ENCODE measurements at regions of chr20 and their contacts with region 1.

Region 1: GRCh38 chr20:44979090-44979621 is 12.8 kb downstream of the STK4 start:
- DNase-seq: peak; percentile 93
- H3K4me3 Mint-ChIP-seq: peak overlapping the region; percentile 78
- H3K27ac Mint-ChIP-seq: peak overlapping the region; percentile 96
- H3K4me1 Mint-ChIP-seq: peaks cover 74% of the 10 kb centered on the region
- H3K27me3 Mint-ChIP-seq: no peaks in the 10 kb centered on the region

Region 2: GRCh38 chr20:44960103-44960852 is 18.9 kb before region 1 on chr20 and contains the start of gene TOMM34:
- intact Hi-C with region 1: loop called (anchors 1 kb)
- DNase-seq: peak; percentile 99
- H3K4me3 Mint-ChIP-seq: peak within 1 kb of the TSS; percentile 97
- H3K27ac Mint-ChIP-seq: peak within 1 kb of the TSS; percentile 99
- H3K4me1 Mint-ChIP-seq: peaks cover 62% of the 10 kb centered on the region
- H3K27me3 Mint-ChIP-seq: no peaks in the 10 kb centered on the region
- total RNA-seq, gene TOMM34: 63.4 and 64.5 TPM in 2 replicates

Region 3: DNA sequence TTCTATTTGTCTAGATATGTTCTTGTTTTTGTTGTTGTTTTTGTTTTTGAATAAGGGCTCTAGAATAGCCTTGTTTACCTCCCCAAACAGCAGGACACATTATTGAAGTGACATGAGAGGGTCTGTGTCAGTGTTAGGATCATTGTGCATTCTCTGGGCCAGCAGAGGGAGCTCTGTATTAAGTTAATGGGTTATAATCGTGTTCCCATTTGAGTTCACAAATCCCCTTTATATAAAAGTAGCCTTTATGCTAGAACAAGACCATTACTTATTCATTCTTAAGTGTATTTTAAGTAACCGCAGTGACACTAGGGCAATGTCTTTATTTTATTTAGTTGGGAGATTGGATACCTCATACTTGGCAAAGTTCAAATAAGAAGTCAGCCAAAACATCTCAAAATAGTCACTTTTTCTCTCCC is 32.0 kb after region 1 on chr20:
- intact Hi-C with region 1: no loop called
- DNase-seq: peak; percentile 79
- H3K4me3 Mint-ChIP-seq: no peak overlapping the region
- H3K27ac Mint-ChIP-seq: peak overlapping the region; percentile 4
- H3K4me1 Mint-ChIP-seq: peaks cover 31% of the 10 kb centered on the region
- H3K27me3 Mint-ChIP-seq: no peaks in the 10 kb centered on the region

Measured in activated CD4-positive, alpha-beta T cell treated with anti-CD3 and anti-CD28 coated beads, Interleukin-2, amount 10 ng/mL, durations not matched to agents 24 days and 14 days (primary cell).